Head of caudate nucleus (tissue), 42 donors: ENCODE measurements at regions of chr3 and their contacts with region 1.

Region 1: DNA sequence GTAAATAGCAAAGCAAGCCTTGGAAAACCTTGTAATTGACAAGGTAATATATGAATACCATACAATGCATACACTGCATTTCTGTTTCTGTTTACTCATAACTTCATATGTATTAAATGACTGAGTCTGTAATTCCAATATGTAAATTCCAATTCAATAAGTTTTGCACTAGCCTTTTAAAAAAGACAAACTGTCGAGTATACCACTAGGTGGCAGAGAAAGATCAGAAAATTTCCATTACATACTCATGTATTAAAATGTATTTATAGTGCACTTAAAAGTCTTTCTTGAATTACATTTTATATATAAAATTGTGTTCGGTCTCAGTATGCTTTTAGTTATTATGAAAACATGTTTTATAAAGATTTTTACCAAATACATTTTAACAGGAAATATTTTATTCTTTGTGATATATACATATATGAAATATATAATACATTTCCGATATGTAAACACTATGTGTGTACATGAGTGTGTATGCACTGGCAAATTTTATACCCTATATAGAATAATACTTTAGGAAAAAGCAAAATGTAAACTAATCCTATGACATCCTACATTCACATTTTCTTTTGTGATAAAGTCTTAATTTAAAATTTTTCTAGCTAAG is 216.8 kb downstream of the VGLL3 start:
- DNase-seq: peak in 1 of 42 donors; percentile 13

Region 2: GRCh38 chr3:87082796-87083440 is 308.7 kb after region 1 on chr3:
- intact Hi-C with region 1: loop called (anchors 5 kb)
- DNase-seq: peak in 18 of 42 donors; percentile 6 to 73 (median 48)

Region 3: DNA sequence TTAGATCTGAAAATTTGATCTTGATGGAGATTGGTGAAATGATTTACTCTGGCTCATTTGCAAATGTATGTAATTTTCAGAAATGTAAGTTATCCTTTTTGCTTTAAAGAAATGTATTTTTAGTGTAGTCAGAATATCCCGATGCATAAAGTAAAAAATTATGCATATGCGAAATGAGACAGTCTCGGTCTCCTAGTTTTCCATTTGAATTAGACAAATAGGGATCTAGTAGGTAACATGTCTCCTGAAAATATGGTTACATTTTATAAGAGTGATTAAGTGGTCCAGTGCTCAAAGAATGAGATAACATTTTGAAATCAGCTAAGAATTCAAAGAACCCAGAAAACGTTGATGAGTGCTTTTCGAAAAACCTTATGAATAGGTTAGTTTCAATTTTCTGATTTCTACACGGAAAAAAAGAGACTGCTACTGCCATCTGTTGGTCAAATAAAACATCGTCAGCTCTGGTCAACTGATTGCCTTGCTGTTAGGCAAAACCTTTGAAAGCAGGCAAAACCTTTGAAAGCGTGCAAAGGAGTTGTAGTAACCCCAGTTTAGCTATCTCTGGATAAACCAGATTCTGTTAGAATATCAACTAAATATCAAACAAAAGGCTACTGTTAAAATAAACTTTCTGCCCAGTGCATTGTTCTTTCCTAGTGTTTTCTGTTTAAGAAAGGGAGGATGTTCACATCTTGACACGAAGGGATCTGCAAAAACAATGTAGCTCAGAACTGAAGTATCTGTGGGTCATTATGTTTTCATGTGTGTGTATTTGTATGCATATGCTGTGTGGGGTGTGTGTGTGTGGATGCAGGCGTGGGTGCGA is 393.7 kb after region 1 on chr3:
- intact Hi-C with region 1: loop called (anchors 5 kb)
- DNase-seq: peak in 32 of 42 donors; percentile 9 to 83 (median 50)